Activated naive CD4-positive, alpha-beta T cell treated with anti-CD3 and anti-CD28 coated beads, Interleukin-2, amount 10 ng/mL, durations not matched to agents 7 days and 5 days (primary cell): ENCODE measurements at regions of chr19 and their contacts with region 1.

Region 1: GRCh38 chr19:35140962-35141637 is 2.0 kb upstream of the FXYD7 start:
- DNase-seq: peak; percentile 97
- H3K4me3 Mint-ChIP-seq: peak overlapping the region; percentile 78
- H3K27ac Mint-ChIP-seq: peak overlapping the region; percentile 91
- H3K4me1 Mint-ChIP-seq: peaks cover 41% of the 10 kb centered on the region
- H3K27me3 Mint-ChIP-seq: peaks cover 66% of the 10 kb centered on the region

Region 2: DNA sequence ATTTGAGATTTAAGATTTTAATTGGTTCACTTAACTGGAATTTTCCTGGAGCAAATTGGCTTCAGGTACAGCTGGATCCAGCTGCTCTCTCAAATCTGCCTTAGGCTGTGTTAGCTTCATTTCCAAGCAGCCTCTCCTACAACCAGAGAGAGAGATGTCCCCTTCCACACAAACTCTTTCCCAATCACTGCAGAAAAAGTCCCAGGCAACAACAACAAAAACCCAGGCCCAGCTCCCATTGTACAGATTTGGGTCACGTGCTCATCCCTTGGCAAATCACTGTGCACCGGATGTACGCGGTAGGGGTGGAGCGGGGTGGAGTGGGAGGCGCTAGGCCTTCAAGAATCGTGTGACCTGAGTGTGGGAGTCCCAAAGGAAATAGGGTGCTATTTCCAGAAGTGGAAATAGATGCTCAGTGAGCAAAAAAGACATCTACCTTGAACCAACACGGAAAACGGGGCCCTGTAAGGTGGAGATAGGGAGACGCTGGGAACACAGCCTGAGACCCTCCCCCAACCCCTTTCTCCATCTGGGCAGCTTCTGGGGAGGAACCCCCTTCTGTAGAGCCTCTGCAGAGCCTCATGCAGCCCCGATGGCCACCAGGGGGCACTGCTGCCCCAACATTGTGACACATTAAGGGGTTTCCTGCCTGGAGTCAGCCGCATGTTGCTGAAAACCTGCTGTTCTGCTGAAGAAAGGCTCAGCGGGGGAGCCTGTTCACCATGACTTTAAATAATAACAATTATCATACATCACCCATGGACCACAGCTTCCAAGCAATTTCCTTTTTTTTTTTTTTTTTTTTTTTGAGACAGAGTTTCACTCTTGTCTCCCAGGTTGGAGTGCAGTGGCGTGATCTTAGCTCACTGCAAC is 74.2 kb before region 1 on chr19:
- CTCF ChIA-PET with region 1: interaction called, 39 read pairs
- DNase-seq: peak; percentile 92
- H3K4me3 Mint-ChIP-seq: no peak overlapping the region
- H3K27ac Mint-ChIP-seq: no peak overlapping the region
- H3K4me1 Mint-ChIP-seq: peaks cover 10% of the 10 kb centered on the region
- H3K27me3 Mint-ChIP-seq: peaks cover 9% of the 10 kb centered on the region

Region 3: DNA sequence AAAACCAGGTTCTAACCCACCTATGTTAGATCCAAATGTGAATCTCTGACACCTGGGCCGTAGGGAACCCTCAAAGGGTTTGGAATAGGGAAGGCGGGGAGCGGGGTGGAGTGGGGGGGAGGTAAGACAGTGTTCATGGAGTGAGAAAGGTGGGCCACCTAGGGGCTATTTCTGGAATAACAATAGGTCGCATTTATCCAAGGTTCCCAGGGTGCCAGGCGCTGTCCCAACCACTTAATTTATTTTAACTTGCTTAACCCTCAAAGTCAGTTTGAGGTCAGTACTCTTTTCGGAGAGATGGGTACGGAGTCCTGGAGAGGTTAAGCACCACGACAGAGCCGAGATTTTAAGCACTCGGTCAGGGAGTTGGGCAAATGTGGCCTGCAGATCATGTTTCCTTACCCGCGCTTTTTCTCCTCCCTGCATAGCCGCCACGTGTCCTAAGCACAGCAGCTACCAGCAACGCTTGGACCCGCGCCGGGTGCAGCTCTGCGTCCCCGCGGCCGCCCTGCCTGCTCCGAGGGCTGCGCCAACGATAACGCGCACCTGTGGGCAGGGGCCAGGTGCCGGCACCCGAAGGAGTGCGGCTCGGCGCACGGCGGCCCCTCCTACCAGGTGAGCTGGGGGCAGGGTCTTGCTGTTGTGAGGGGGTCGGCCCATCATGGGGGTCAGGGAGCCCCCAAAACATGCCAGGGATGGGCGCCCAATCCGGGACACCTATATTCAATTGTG is 50.4 kb before region 1 on chr19:
- CTCF ChIA-PET with region 1: no interaction called
- DNase-seq: peak; percentile 55
- H3K4me3 Mint-ChIP-seq: no peak overlapping the region
- H3K27ac Mint-ChIP-seq: no peak overlapping the region
- H3K4me1 Mint-ChIP-seq: peaks cover 2% of the 10 kb centered on the region
- H3K27me3 Mint-ChIP-seq: peaks cover 33% of the 10 kb centered on the region

Region 4: DNA sequence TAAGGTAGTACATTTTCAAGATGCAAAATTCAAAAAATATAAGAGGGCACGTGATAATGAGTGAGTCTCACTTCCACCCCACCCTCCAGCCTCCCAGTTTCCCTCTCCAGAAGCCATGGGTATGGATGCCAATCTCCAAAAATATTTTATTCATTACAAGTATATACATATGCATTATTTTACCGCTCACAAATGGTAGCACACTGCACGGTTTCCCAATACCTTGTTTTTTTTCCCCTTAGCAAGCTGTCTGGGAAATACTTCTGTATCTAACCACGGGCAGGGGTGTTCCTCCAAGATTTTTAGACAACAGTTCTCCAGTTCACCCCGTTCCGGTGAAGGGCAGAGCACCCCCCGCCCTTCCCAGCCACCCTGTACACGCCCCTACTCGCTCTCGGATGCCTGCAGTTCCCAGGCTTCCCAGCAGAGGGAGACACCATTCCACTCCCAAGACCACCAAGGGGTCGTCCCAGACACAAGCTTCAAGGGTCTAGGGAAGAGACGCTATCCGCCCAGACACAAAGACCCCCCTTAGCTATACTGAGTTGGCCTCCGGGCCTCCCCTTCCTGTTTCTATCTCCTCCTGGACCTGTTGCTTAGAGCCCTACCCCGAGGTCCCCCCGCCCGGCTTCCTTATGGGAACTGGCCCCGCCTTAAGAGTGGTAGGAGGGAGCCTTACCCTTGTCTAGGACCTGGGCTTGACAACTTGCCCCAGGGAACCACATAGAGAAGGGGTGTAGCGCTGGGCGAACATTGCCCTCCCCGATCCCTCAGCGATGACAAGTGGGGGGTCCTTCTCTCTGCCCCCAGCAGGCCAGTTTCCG is 26.5 kb before region 1 on chr19:
- CTCF ChIA-PET with region 1: interaction called, 24 read pairs
- DNase-seq: peak; percentile 77
- H3K4me3 Mint-ChIP-seq: no peak overlapping the region
- H3K27ac Mint-ChIP-seq: peak overlapping the region; percentile 24
- H3K4me1 Mint-ChIP-seq: peaks cover 9% of the 10 kb centered on the region
- H3K27me3 Mint-ChIP-seq: peaks cover 31% of the 10 kb centered on the region

Region 5: GRCh38 chr19:35154525-35155406 is 13.7 kb after region 1 on chr19 and contains the start of gene FXYD5:
- CTCF ChIA-PET with region 1: interaction called, 50 read pairs
- DNase-seq: peak; percentile 85
- H3K4me3 Mint-ChIP-seq: peak within 1 kb of the TSS; percentile 98
- H3K27ac Mint-ChIP-seq: peak within 1 kb of the TSS; percentile 95
- H3K4me1 Mint-ChIP-seq: peaks cover 67% of the 10 kb centered on the region
- H3K27me3 Mint-ChIP-seq: peaks cover 22% of the 10 kb centered on the region

Region 6: GRCh38 chr19:35195830-35196229 is 54.7 kb after region 1 on chr19:
- CTCF ChIA-PET with region 1: no interaction called
- DNase-seq: no peak
- H3K4me3 Mint-ChIP-seq: no peak overlapping the region
- H3K27ac Mint-ChIP-seq: peak overlapping the region; percentile 16
- H3K4me1 Mint-ChIP-seq: peaks cover 38% of the 10 kb centered on the region
- H3K27me3 Mint-ChIP-seq: peaks cover 9% of the 10 kb centered on the region

Region 7: GRCh38 chr19:35213663-35214632 is 72.8 kb after region 1 on chr19:
- CTCF ChIA-PET with region 1: interaction called, 44 read pairs
- DNase-seq: peak; percentile 81
- H3K4me3 Mint-ChIP-seq: peak overlapping the region; percentile 15
- H3K27ac Mint-ChIP-seq: peak overlapping the region; percentile 100
- H3K4me1 Mint-ChIP-seq: peaks cover 84% of the 10 kb centered on the region
- H3K27me3 Mint-ChIP-seq: no peaks in the 10 kb centered on the region

Region 8: GRCh38 chr19:35357867-35358573 is 216.9 kb after region 1 on chr19 and contains the start of gene FFAR3:
- CTCF ChIA-PET with region 1: no interaction called
- DNase-seq: no peak
- H3K4me3 Mint-ChIP-seq: no peak within 1 kb of the TSS
- H3K27ac Mint-ChIP-seq: no peak within 1 kb of the TSS
- H3K4me1 Mint-ChIP-seq: peaks cover 10% of the 10 kb centered on the region
- H3K27me3 Mint-ChIP-seq: peaks cover 34% of the 10 kb centered on the region